ENCODE measurements at regions of chr11 and their contacts with region 1.

Region 1: DNA sequence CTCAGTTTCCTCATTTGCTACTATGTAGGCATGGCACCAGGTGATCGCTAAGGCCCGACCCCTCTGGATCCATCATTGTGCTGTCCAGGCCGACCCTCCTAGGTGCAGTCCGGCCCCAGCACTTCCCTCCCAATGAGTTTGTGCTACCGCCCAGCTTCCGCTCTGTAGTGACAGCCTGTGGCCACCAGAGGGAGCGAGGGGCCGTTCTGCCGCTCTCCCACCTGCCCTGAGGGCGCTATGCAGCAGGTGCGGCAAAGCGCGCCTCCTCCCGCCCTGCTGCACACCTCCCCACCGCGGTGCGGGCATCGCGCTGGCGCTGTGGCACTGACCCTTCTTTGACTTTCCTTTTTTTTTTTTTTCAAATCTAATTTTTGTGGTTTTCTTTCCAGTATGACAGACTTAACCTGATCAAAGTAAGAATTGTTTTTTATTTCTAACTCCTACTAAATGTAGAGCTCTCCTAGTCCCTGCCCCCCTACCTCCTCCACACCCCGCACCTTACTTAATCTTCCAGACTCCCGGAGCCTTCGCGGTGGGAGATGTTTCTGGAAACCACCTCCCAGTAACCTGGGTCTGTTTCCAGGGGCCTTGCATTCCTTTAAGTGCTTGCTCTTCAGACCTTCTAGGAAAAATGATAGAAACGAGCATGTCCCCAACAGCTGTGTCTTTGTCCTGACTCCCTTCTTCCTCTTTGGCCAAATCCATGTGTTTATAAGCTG is 73.7 kb downstream of the SCN3B start:
- DNase-seq: peak; percentile 42 to 83
- ATAC-seq: peak; percentile 79 to 92 (median 89)
- H3K4me3 ChIP-seq: no peak overlapping the region
- H3K4me3 Mint-ChIP-seq: no peak overlapping the region
- H3K27ac ChIP-seq: no peak overlapping the region
- H3K27ac Mint-ChIP-seq: no peak overlapping the region
- H3K4me1 ChIP-seq: peaks cover 14% of the 10 kb centered on the region
- H3K4me1 Mint-ChIP-seq: peaks cover 18 to 23% of the 10 kb centered on the region in 2 donors
- H3K27me3 ChIP-seq: no peaks in the 10 kb centered on the region
- H3K27me3 Mint-ChIP-seq: peaks cover 2 to 8% of the 10 kb centered on the region in 2 donors
- CTCF ChIP-seq: peak; percentile 76

Region 2: DNA sequence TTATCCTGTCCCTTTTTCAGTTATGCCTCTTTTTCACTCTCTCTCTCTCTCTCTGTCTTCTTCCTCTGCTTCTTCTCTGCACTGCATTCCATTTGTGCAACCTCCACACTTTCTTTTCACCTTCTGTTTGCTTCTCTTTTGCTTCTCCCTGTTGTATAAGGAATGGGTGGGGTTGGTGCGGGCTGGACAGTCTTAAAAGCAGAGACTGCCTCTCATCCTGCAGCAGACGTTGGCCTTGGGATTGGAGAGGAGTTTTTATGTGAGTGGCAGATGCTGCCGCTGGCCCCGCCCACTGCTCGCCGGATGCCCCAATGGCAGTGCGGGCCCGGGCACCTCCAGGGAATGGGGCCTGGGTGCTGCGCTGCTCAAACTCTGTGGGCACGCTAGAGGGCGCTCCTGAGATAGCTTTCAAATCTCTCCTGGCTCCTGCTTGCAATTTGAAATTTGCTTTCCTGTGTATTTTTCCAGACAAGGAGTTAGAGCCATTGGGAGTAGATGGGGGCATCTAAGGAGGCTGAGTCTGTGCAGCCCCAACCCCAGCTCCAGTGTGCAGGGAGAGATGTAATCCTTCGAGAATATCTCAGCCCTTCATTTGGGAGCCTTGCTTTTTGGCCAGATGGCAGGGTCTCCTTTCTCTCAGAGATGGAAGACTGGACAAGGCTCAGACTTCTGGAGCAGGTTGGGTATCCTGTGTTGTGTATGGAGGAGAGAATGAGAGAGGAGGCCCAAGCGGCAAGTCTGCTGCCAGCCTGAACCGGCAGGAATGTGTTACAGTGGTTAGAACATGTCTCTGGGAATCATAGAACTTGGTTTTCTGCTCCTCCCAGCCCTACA is 69.5 kb before region 1 on chr11:
- intact Hi-C with region 1: loop called (anchors 2 kb)
- DNase-seq: peak; percentile 55 to 81
- ATAC-seq: peak; percentile 85 to 98 (median 87)
- H3K4me3 ChIP-seq: no peak overlapping the region
- H3K4me3 Mint-ChIP-seq: no peak overlapping the region
- H3K27ac ChIP-seq: no peak overlapping the region
- H3K27ac Mint-ChIP-seq: no peak overlapping the region
- H3K4me1 ChIP-seq: peaks cover 3% of the 10 kb centered on the region
- H3K4me1 Mint-ChIP-seq: peaks cover 0 to 14% of the 10 kb centered on the region in 2 donors
- H3K27me3 ChIP-seq: no peaks in the 10 kb centered on the region
- H3K27me3 Mint-ChIP-seq: peaks cover 0 to 4% of the 10 kb centered on the region in 2 donors
- CTCF ChIP-seq: peak; percentile 82

Region 3: GRCh38 chr11:123707606-123708205 is 127.0 kb after region 1 on chr11:
- intact Hi-C with region 1: loop called (anchors 2 kb)
- DNase-seq: peak in 1 of 2 donors; percentile 79
- ATAC-seq: peak in 1 of 3 donors; percentile 51
- H3K4me3 ChIP-seq: no peak overlapping the region
- H3K4me3 Mint-ChIP-seq: no peak overlapping the region
- H3K27ac ChIP-seq: no peak overlapping the region
- H3K27ac Mint-ChIP-seq: no peak overlapping the region
- H3K4me1 ChIP-seq: no peaks in the 10 kb centered on the region
- H3K4me1 Mint-ChIP-seq: no peaks in the 10 kb centered on the region
- H3K27me3 ChIP-seq: no peaks in the 10 kb centered on the region
- H3K27me3 Mint-ChIP-seq: peaks cover 0 to 8% of the 10 kb centered on the region in 2 donors
- CTCF ChIP-seq: peak; percentile 53